ENCODE measurements at regions of chr5 and their contacts with region 1.

Region 1: GRCh38 chr5:112691758-112692157 is 45.9 kb upstream of the APC start:
- H3K4me3 Mint-ChIP-seq: no peak overlapping the region
- H3K27ac Mint-ChIP-seq: no peak overlapping the region
- H3K4me1 Mint-ChIP-seq: peaks cover 6% of the 10 kb centered on the region
- H3K27me3 Mint-ChIP-seq: peaks cover 20% of the 10 kb centered on the region

Region 2: GRCh38 chr5:112757468-112758208 is 65.9 kb after region 1 on chr5:
- intact Hi-C with region 1: loop called (anchors 1 kb)
- H3K4me3 Mint-ChIP-seq: no peak overlapping the region
- H3K27ac Mint-ChIP-seq: peak overlapping the region; percentile 34
- H3K4me1 Mint-ChIP-seq: peaks cover 5% of the 10 kb centered on the region
- H3K27me3 Mint-ChIP-seq: no peaks in the 10 kb centered on the region

Region 3: GRCh38 chr5:114185274-114185673 is 1493.5 kb after region 1 on chr5:
- intact Hi-C with region 1: no loop called
- H3K4me3 Mint-ChIP-seq: no peak overlapping the region
- H3K27ac Mint-ChIP-seq: no peak overlapping the region
- H3K4me1 Mint-ChIP-seq: no peaks in the 10 kb centered on the region
- H3K27me3 Mint-ChIP-seq: no peaks in the 10 kb centered on the region

Measured in dendritic cell treated with granulocyte-macrophage colony-stimulating factor and Interleukin-4, amounts not matched to agents 40 ng/mL and 50 ng/mL, for 4 days (primary cell).